IMR-90 (cell line): ENCODE measurements at regions of chr17 and their contacts with region 1.

Region 1: GRCh38 chr17:48162946-48163506 is 55.5 kb downstream of the SNX11 start:
- DNase-seq: no peak
- ATAC-seq: no peak
- H3K4me3 ChIP-seq: no peak overlapping the region
- H3K27ac ChIP-seq: no peak overlapping the region
- H3K4me1 ChIP-seq: no peaks in the 10 kb centered on the region
- H3K27me3 ChIP-seq: peaks cover 60% of the 10 kb centered on the region
- CTCF ChIP-seq: no peak
- POLR2A ChIP-seq: no peak
- RAD21 ChIP-seq: no peak

Region 2: GRCh38 chr17:47905221-47905781 is 257.7 kb before region 1 on chr17:
- CTCF ChIA-PET with region 1: no interaction called
- POLR2A ChIA-PET with region 1: no interaction called
- dilution Hi-C with region 1: no loop called
- in situ Hi-C with region 1: no loop called
- intact Hi-C with region 1: no loop called
- DNase-seq: peak; percentile 78
- ATAC-seq: peak; percentile 92
- H3K4me3 ChIP-seq: no peak overlapping the region
- H3K27ac ChIP-seq: peak overlapping the region; percentile 12; the same call in 1 of the 2 replicates
- H3K4me1 ChIP-seq: peaks cover 10% of the 10 kb centered on the region
- H3K27me3 ChIP-seq: no peaks in the 10 kb centered on the region
- CTCF ChIP-seq: no peak
- POLR2A ChIP-seq: no peak
- RAD21 ChIP-seq: no peak

Region 3: DNA sequence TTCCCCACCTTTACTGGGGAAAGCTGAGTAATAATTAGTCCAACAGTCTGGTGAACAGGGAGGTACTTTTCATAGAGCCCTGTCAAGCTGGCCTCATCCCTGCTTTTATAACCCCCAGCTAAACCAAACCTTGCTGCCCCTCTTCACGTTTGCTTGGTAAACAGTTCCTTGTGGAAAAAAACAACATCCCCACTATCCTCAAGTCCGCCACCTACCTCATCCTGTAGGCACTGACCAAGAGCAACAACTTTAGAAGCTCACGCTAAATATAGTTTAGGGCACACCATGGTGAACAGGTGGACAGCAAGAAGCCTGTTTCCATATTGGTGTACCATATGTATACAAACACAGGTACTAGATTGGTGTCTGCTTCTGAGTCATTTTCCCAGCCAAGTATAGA is 98.4 kb before region 1 on chr17:
- CTCF ChIA-PET with region 1: no interaction called
- POLR2A ChIA-PET with region 1: no interaction called
- dilution Hi-C with region 1: no loop called
- in situ Hi-C with region 1: no loop called
- intact Hi-C with region 1: no loop called
- DNase-seq: no peak
- ATAC-seq: no peak
- H3K4me3 ChIP-seq: no peak overlapping the region
- H3K27ac ChIP-seq: no peak overlapping the region
- H3K4me1 ChIP-seq: peaks cover 4% of the 10 kb centered on the region
- H3K27me3 ChIP-seq: no peaks in the 10 kb centered on the region
- CTCF ChIP-seq: no peak
- POLR2A ChIP-seq: no peak
- RAD21 ChIP-seq: no peak

Region 4: GRCh38 chr17:48625495-48626244 is 462.6 kb after region 1 on chr17:
- CTCF ChIA-PET with region 1: no interaction called
- POLR2A ChIA-PET with region 1: no interaction called
- dilution Hi-C with region 1: no loop called
- in situ Hi-C with region 1: loop called (anchors 10 kb)
- intact Hi-C with region 1: no loop called
- DNase-seq: peak; percentile 12
- ATAC-seq: peak; percentile 41
- H3K4me3 ChIP-seq: peak overlapping the region; percentile 38
- H3K27ac ChIP-seq: no peak overlapping the region
- H3K4me1 ChIP-seq: no peaks in the 10 kb centered on the region; the same call in 1 of the 2 replicates
- H3K27me3 ChIP-seq: peaks cover 98% of the 10 kb centered on the region
- CTCF ChIP-seq: no peak
- POLR2A ChIP-seq: no peak
- RAD21 ChIP-seq: no peak